ENCODE measurements at regions of chr14 and their contacts with region 1.

Region 1: GRCh38 chr14:75811872-75812499 is 150.9 kb downstream of the TTLL5 start:
- DNase-seq: peak; percentile 68 to 69
- H3K4me3 ChIP-seq: no peak overlapping the region
- H3K4me3 Mint-ChIP-seq: peak overlapping the region; percentile 54
- H3K27ac Mint-ChIP-seq: peak overlapping the region; percentile 85
- H3K4me1 ChIP-seq: peaks cover 20% of the 10 kb centered on the region
- H3K4me1 Mint-ChIP-seq: peaks cover 23% of the 10 kb centered on the region
- H3K27me3 ChIP-seq: no peaks in the 10 kb centered on the region
- H3K27me3 Mint-ChIP-seq: no peaks in the 10 kb centered on the region
- CTCF ChIP-seq: no peak

Region 2: DNA sequence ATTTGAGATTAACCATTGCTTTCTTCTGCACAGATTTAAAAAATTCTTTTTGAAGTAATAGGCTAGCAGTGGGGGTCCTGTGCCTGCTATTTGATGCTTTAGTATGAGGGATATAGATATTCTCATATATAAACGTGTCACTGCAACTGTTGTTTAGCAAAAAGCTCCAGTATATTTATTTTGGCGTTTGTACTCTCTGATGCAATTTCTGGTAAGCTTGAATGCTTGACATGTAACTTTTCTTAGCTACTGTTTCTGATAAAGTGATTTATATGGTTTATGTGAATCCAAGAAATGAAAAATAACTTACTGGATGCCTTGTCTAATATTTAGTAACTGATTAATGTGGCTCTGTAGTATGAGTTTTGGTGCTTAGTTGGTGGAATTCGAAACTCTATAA is 73.8 kb before region 1 on chr14:
- CTCF ChIA-PET with region 1: no interaction called
- POLR2A ChIA-PET with region 1: no interaction called
- intact Hi-C with region 1: no loop called
- DNase-seq: no peak
- H3K4me3 ChIP-seq: no peak overlapping the region
- H3K4me3 Mint-ChIP-seq: no peak overlapping the region
- H3K27ac Mint-ChIP-seq: no peak overlapping the region
- H3K4me1 ChIP-seq: no peaks in the 10 kb centered on the region
- H3K4me1 Mint-ChIP-seq: peaks cover 7% of the 10 kb centered on the region
- H3K27me3 ChIP-seq: no peaks in the 10 kb centered on the region
- H3K27me3 Mint-ChIP-seq: no peaks in the 10 kb centered on the region
- CTCF ChIP-seq: no peak

Region 3: GRCh38 chr14:75822522-75823141 is 10.6 kb after region 1 on chr14:
- CTCF ChIA-PET with region 1: interaction called, 6 read pairs
- POLR2A ChIA-PET with region 1: interaction called, 4 read pairs
- intact Hi-C with region 1: loop called (anchors 1 kb)
- DNase-seq: no peak
- H3K4me3 ChIP-seq: no peak overlapping the region
- H3K4me3 Mint-ChIP-seq: peak overlapping the region; percentile 8
- H3K27ac Mint-ChIP-seq: peak overlapping the region; percentile 71
- H3K4me1 ChIP-seq: peaks cover 64% of the 10 kb centered on the region
- H3K4me1 Mint-ChIP-seq: peaks cover 38% of the 10 kb centered on the region
- H3K27me3 ChIP-seq: no peaks in the 10 kb centered on the region
- H3K27me3 Mint-ChIP-seq: no peaks in the 10 kb centered on the region
- CTCF ChIP-seq: no peak

Region 4: GRCh38 chr14:75831458-75831857 is 19.5 kb after region 1 on chr14:
- CTCF ChIA-PET with region 1: no interaction called
- POLR2A ChIA-PET with region 1: interaction called, 10 read pairs
- intact Hi-C with region 1: loop called (anchors 1 kb)
- DNase-seq: peak; percentile 92
- H3K4me3 ChIP-seq: no peak overlapping the region
- H3K4me3 Mint-ChIP-seq: peak overlapping the region; percentile 44
- H3K27ac Mint-ChIP-seq: peak overlapping the region; percentile 87
- H3K4me1 ChIP-seq: peaks cover 58% of the 10 kb centered on the region
- H3K4me1 Mint-ChIP-seq: peaks cover 24% of the 10 kb centered on the region
- H3K27me3 ChIP-seq: no peaks in the 10 kb centered on the region
- H3K27me3 Mint-ChIP-seq: no peaks in the 10 kb centered on the region
- CTCF ChIP-seq: no peak

Region 5: GRCh38 chr14:75871181-75871880 is 59.3 kb after region 1 on chr14:
- CTCF ChIA-PET with region 1: no interaction called
- POLR2A ChIA-PET with region 1: interaction called, 5 read pairs
- intact Hi-C with region 1: loop called (anchors 1 kb)
- DNase-seq: peak; percentile 87 to 88
- H3K4me3 ChIP-seq: no peak overlapping the region
- H3K4me3 Mint-ChIP-seq: peak overlapping the region; percentile 22
- H3K27ac Mint-ChIP-seq: peak overlapping the region; percentile 74
- H3K4me1 ChIP-seq: peaks cover 40% of the 10 kb centered on the region
- H3K4me1 Mint-ChIP-seq: peaks cover 37% of the 10 kb centered on the region
- H3K27me3 ChIP-seq: no peaks in the 10 kb centered on the region
- H3K27me3 Mint-ChIP-seq: no peaks in the 10 kb centered on the region
- CTCF ChIP-seq: no peak

Region 6: DNA sequence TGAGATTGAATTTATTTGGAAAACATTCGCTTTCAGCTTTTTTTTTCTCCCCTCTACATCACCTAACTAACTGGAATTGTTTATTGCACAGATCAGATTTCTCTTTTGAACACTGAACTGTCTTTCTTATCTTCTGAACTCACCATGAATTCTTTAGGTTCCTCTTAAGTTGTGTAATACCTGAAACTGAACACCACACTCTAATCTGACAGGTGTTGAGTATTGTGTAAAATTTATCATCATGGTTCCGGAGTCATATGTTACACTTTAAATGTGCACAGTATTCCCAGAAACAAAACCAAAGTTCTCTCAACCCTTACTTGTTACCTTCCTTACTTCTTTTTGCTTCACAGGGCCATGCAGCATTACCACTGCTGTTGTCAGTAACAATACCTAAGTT is 103.1 kb after region 1 on chr14:
- CTCF ChIA-PET with region 1: no interaction called
- POLR2A ChIA-PET with region 1: interaction called, 10 read pairs
- intact Hi-C with region 1: no loop called
- DNase-seq: peak in 1 of 2 experiments; percentile 39
- H3K4me3 ChIP-seq: no peak overlapping the region
- H3K4me3 Mint-ChIP-seq: peak overlapping the region; percentile 56
- H3K27ac Mint-ChIP-seq: peak overlapping the region; percentile 63
- H3K4me1 ChIP-seq: peaks cover 41% of the 10 kb centered on the region
- H3K4me1 Mint-ChIP-seq: peaks cover 32% of the 10 kb centered on the region
- H3K27me3 ChIP-seq: no peaks in the 10 kb centered on the region
- H3K27me3 Mint-ChIP-seq: no peaks in the 10 kb centered on the region
- CTCF ChIP-seq: no peak